ENCODE measurements at regions of chr7 and their contacts with region 1.

Region 1: DNA sequence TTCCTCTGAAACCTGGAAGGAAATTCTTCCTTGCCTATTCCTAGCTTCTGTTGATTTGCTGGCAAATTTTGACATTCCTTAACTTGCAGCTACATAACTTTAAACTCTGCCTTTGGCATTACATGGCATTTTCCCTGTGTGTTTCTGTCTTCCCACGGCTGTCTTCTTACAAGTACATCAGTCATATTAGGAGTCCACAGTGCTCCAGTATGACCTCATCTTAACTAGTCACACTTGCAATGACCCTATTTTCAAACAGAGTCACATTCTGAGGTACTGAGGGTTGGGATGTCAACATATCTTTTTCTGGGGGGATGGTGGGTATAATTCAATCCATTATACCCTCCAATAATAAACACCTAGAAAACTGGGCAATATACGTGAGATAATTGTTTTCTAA is 37.4 kb upstream of the EPHB6 start:
- DNase-seq: no peak
- ATAC-seq: no peak
- H3K4me3 ChIP-seq: no peak overlapping the region
- H3K27ac ChIP-seq: no peak overlapping the region
- H3K4me1 ChIP-seq: no peaks in the 10 kb centered on the region
- H3K27me3 ChIP-seq: no peaks in the 10 kb centered on the region
- CTCF ChIP-seq: no peak
- EP300 ChIP-seq: no peak
- POLR2A ChIP-seq: no peak
- RAD21 ChIP-seq: no peak

Region 2: DNA sequence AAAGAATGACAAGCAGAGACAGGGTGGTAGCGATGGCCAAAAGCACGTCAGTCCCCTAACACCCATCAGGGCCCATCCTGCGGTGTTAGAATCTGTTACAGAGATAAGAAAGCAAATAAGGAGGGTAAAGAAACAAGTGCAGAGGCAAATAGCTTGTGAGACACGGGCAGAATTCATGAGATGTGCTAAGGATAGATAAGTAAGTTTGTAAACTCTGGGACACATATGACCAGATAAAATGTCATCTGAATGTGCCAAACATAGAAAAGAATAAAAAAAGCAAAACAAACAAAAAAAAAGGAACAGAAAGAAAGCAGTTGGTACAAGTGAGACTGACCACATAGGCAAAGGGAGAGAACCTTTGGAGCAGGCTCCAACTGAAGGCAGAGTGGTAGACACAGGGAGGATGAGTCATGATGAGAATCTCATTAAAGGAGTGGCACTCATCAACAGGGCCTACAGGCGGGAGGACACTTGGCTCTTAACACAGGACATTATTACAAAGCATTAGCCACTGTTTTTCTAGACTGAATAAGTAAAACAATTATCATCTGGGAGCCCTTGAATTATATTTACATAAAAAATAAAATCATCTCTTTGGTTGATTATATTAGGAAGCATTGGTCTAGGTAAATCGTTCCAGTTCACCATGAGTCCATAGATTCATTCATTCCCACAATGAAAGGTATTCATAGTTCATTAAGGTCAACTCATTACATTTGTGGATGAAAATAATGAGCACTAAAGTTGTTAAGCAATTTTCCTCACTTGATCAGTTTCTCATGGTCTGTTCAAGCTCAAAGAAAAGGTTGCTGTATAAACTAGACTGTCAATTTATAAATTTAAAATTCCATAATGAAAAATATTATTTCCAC is 15.9 kb after region 1 on chr7:
- CTCF ChIA-PET with region 1: interaction called, 72 read pairs
- POLR2A ChIA-PET with region 1: interaction called, 9 read pairs
- RAD21 ChIA-PET with region 1: interaction called, 73 read pairs
- SMC1A ChIA-PET with region 1: interaction called, 62 read pairs
- in situ Hi-C with region 1: no loop called
- intact Hi-C with region 1: no loop called
- DNase-seq: no peak
- ATAC-seq: peak; percentile 89
- H3K4me3 ChIP-seq: no peak overlapping the region
- H3K27ac ChIP-seq: no peak overlapping the region
- H3K4me1 ChIP-seq: peaks cover 19% of the 10 kb centered on the region
- H3K27me3 ChIP-seq: no peaks in the 10 kb centered on the region
- CTCF ChIP-seq: no peak
- EP300 ChIP-seq: peak; percentile 49 to 60; a peak in 3 of 4 replicates
- POLR2A ChIP-seq: no peak
- RAD21 ChIP-seq: no peak

Region 3: DNA sequence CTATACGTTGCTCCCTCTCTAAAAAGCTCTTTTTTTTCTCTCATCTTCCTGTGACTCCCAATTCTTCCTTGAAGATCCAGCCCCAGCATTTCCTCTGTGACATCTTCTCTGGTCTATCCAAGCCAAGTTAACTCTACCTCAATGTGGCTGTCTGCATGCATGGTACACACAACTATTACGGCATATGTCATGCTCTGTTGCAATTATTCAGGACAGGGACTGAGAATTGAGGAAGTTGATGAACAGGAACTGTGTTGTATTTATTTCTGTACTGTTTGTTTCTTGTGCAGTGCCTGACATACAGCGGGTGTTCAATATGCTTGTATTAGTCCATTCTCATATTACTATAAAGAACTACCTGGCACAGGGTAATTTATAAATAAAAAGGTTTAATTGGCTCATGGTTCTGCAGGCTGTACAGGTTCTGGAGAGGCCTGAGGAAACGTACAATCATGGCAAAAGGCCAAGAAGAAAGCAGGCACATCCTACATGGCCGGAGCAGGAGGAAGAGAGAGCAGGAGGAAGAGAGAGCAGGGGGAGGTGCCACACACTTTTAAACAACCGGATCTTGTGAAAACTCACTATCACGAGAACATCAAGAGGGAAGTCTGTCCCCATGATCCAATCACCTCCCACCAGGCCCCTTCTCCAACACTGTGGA is 109.7 kb after region 1 on chr7:
- CTCF ChIA-PET with region 1: no interaction called
- POLR2A ChIA-PET with region 1: no interaction called
- RAD21 ChIA-PET with region 1: no interaction called
- SMC1A ChIA-PET with region 1: no interaction called
- in situ Hi-C with region 1: no loop called
- intact Hi-C with region 1: no loop called
- DNase-seq: no peak
- ATAC-seq: no peak
- H3K4me3 ChIP-seq: no peak overlapping the region
- H3K27ac ChIP-seq: no peak overlapping the region
- H3K4me1 ChIP-seq: no peaks in the 10 kb centered on the region
- H3K27me3 ChIP-seq: no peaks in the 10 kb centered on the region; a peak in 3 of 4 replicates
- CTCF ChIP-seq: no peak
- EP300 ChIP-seq: no peak
- POLR2A ChIP-seq: no peak
- RAD21 ChIP-seq: no peak

Measured in GM12878 (cell line).